Activated B cell treated with CpG ODN at 0.5 μM for 24 hours (primary cell): ENCODE measurements at regions of chr1 and their contacts with region 1.

Region 1: GRCh38 chr1:174953285-174954072 is 46.3 kb upstream of the CACYBP start:
- DNase-seq: no peak
- ATAC-seq: peak; percentile 67
- H3K4me3 Mint-ChIP-seq: peak overlapping the region; percentile 70
- H3K27ac Mint-ChIP-seq: peak overlapping the region; percentile 79
- H3K4me1 Mint-ChIP-seq: peaks cover 51% of the 10 kb centered on the region
- H3K27me3 Mint-ChIP-seq: no peaks in the 10 kb centered on the region
- CTCF ChIP-seq: no peak

Region 2: GRCh38 chr1:174968750-174969244 is 15.3 kb after region 1 on chr1:
- CTCF ChIA-PET with region 1: interaction called, 3 read pairs
- POLR2A ChIA-PET with region 1: interaction called, 11 read pairs
- intact Hi-C with region 1: loop called (anchors 1 kb)
- DNase-seq: no peak
- ATAC-seq: peak; percentile 64
- H3K4me3 Mint-ChIP-seq: peak overlapping the region; percentile 73
- H3K27ac Mint-ChIP-seq: peak overlapping the region; percentile 85
- H3K4me1 Mint-ChIP-seq: peaks cover 68% of the 10 kb centered on the region
- H3K27me3 Mint-ChIP-seq: no peaks in the 10 kb centered on the region
- CTCF ChIP-seq: no peak

Region 3: GRCh38 chr1:175331891-175332290 is 378.4 kb after region 1 on chr1:
- CTCF ChIA-PET with region 1: no interaction called
- POLR2A ChIA-PET with region 1: no interaction called
- intact Hi-C with region 1: no loop called
- DNase-seq: no peak
- ATAC-seq: no peak
- H3K4me3 Mint-ChIP-seq: no peak overlapping the region
- H3K27ac Mint-ChIP-seq: no peak overlapping the region
- H3K4me1 Mint-ChIP-seq: no peaks in the 10 kb centered on the region
- H3K27me3 Mint-ChIP-seq: peaks cover 1% of the 10 kb centered on the region
- CTCF ChIP-seq: no peak

Region 4: GRCh38 chr1:176149939-176150807 is 1196.7 kb after region 1 on chr1:
- CTCF ChIA-PET with region 1: no interaction called
- POLR2A ChIA-PET with region 1: no interaction called
- intact Hi-C with region 1: no loop called
- DNase-seq: no peak
- ATAC-seq: no peak
- H3K4me3 Mint-ChIP-seq: no peak overlapping the region
- H3K27ac Mint-ChIP-seq: no peak overlapping the region
- H3K4me1 Mint-ChIP-seq: no peaks in the 10 kb centered on the region
- H3K27me3 Mint-ChIP-seq: no peaks in the 10 kb centered on the region
- CTCF ChIP-seq: no peak